Activated CD4-positive, alpha-beta memory T cell treated with anti-CD3 and anti-CD28 coated beads, Interleukin-2, amount 10 ng/mL, durations not matched to agents 7 days and 5 days (primary cell): ENCODE measurements at regions of chr12 and their contacts with region 1.

Region 1: GRCh38 chr12:1594261-1595025 is at the start of gene FBXL14:
- DNase-seq: peak; percentile 91
- H3K4me3 Mint-ChIP-seq: peak within 1 kb of the TSS; percentile 93
- H3K27ac Mint-ChIP-seq: peak within 1 kb of the TSS; percentile 95
- H3K4me1 Mint-ChIP-seq: peaks cover 48% of the 10 kb centered on the region
- H3K27me3 Mint-ChIP-seq: no peaks in the 10 kb centered on the region
- total RNA-seq, gene FBXL14: 30.3 to 30.9 TPM

Region 2: GRCh38 chr12:1583421-1584078 is 10.9 kb before region 1 on chr12:
- CTCF ChIA-PET with region 1: interaction called, 30 read pairs
- POLR2A ChIA-PET with region 1: interaction called, 6 read pairs
- DNase-seq: peak; percentile 67
- H3K4me3 Mint-ChIP-seq: no peak overlapping the region
- H3K27ac Mint-ChIP-seq: no peak overlapping the region
- H3K4me1 Mint-ChIP-seq: peaks cover 14% of the 10 kb centered on the region
- H3K27me3 Mint-ChIP-seq: no peaks in the 10 kb centered on the region

Region 3: DNA sequence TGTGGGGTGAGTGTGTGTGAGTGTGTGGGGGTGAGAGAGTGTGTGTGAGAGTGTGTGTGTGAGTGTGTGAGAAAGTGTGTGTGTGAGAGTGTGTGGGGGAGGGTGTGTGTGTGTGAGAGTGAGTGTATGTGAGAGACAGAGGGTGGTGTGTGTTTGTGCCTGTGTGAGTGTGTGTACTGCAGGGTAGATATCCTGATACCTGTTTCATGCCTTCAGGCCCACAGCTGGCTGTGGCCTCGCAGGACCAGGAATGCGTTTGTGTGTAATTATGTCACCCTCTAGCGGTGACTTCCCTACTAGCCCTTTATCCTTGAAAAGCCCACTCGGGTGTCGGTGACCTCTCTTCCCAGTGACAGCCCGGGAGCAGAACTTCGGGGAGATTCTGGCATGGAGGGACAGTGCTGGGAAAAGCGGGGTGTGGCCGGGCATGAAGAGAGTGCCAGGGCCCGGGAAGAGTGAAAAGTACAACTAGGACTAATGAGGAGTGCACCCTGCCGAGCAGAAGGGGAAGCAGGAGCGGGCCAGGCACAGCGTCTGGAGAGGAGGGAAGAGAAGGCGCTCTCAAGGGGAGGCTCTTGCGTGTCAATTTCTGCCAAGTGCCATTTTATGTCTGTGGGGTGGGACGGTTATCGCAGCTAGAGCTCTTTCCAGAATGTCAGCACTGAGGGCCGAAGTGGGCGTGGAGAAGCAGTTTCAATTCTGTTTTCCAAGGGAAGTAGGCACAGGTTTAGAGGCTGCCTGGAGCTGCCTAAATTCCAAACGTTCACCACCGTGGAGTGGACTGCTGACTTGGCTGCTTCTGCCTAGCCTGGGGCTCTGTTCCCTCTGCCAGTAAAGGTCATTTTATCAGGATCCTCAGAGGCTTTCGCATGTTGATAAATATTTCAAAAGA is 10.9 kb after region 1 on chr12:
- CTCF ChIA-PET with region 1: interaction called, 36 read pairs
- POLR2A ChIA-PET with region 1: interaction called, 63 read pairs
- DNase-seq: peak; percentile 60
- H3K4me3 Mint-ChIP-seq: peak overlapping the region; percentile 68
- H3K27ac Mint-ChIP-seq: peak overlapping the region; percentile 5
- H3K4me1 Mint-ChIP-seq: peaks cover 42% of the 10 kb centered on the region
- H3K27me3 Mint-ChIP-seq: no peaks in the 10 kb centered on the region

Region 4: GRCh38 chr12:1634590-1635191 is 40.2 kb after region 1 on chr12:
- CTCF ChIA-PET with region 1: no interaction called
- POLR2A ChIA-PET with region 1: no interaction called
- DNase-seq: peak; percentile 68
- H3K4me3 Mint-ChIP-seq: no peak overlapping the region
- H3K27ac Mint-ChIP-seq: no peak overlapping the region
- H3K4me1 Mint-ChIP-seq: peaks cover 9% of the 10 kb centered on the region
- H3K27me3 Mint-ChIP-seq: peaks cover 61% of the 10 kb centered on the region